Activated CD8-positive, alpha-beta T cell treated with anti-CD3 and anti-CD28 coated beads for 36 hours (primary cell): ENCODE measurements at regions of chr20 and their contacts with region 1.

Region 1: GRCh38 chr20:37192137-37192854 is 12.9 kb upstream of the MROH8 start:
- DNase-seq: peak; percentile 83
- ATAC-seq: peak; percentile 85
- H3K4me3 Mint-ChIP-seq: no peak overlapping the region
- H3K27ac Mint-ChIP-seq: no peak overlapping the region
- H3K4me1 Mint-ChIP-seq: peaks cover 74% of the 10 kb centered on the region
- H3K27me3 Mint-ChIP-seq: no peaks in the 10 kb centered on the region
- CTCF ChIP-seq: peak; percentile 90

Region 2: GRCh38 chr20:37178839-37179670 is 13.2 kb before region 1 on chr20 and contains the starts of genes MROH8 and RPN2:
- CTCF ChIA-PET with region 1: interaction called, 123 read pairs
- POLR2A ChIA-PET with region 1: interaction called, 30 read pairs
- intact Hi-C with region 1: no loop called
- DNase-seq: peak; percentile 98
- ATAC-seq: peak; percentile 94
- H3K4me3 Mint-ChIP-seq: peak within 1 kb of the TSS; percentile 91
- H3K27ac Mint-ChIP-seq: peak within 1 kb of the TSS; percentile 98
- H3K4me1 Mint-ChIP-seq: peaks cover 36% of the 10 kb centered on the region
- H3K27me3 Mint-ChIP-seq: no peaks in the 10 kb centered on the region
- CTCF ChIP-seq: no peak
- total RNA-seq, gene MROH8: 2.1 to 3.1 TPM
- total RNA-seq, gene RPN2: 103 to 107 TPM

Region 3: GRCh38 chr20:37202267-37202943 is 10.1 kb after region 1 on chr20:
- CTCF ChIA-PET with region 1: interaction called, 45 read pairs
- POLR2A ChIA-PET with region 1: no interaction called
- intact Hi-C with region 1: no loop called
- DNase-seq: peak; percentile 35
- ATAC-seq: no peak
- H3K4me3 Mint-ChIP-seq: no peak overlapping the region
- H3K27ac Mint-ChIP-seq: no peak overlapping the region
- H3K4me1 Mint-ChIP-seq: peaks cover 3% of the 10 kb centered on the region
- H3K27me3 Mint-ChIP-seq: no peaks in the 10 kb centered on the region
- CTCF ChIP-seq: peak; percentile 70

Region 4: DNA sequence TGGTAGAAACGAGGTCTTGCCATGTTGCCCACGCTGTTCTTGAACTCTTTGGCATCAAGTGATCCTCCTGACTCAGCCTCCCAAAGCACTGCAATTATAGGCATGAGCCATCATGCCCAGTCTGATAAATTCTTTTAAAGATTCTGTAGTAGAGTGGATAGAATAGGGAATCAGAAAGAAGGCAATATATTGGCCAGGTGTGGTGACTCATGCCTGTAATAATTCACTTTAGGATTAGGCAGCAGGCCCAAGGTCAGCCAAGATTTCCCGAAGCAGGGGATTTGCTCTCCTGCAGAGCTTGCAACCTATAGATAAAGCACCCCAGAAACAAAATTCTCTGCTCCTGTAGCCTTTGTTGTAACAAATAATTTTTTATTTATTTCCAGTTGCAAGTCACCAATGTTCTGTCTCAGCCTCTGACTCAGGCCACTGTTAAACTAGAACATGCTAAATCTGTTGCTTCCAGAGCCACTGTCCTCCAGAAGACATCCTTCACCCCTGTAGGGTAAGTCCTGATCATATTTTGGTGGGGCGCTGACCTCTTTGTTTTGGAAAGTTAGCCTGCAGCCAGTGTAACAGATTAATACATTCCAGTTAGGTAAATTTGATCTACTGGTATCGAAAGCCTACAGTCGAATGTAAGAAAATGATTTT is 17.5 kb after region 1 on chr20:
- CTCF ChIA-PET with region 1: interaction called, 21 read pairs
- POLR2A ChIA-PET with region 1: no interaction called
- intact Hi-C with region 1: no loop called
- DNase-seq: no peak
- ATAC-seq: no peak
- H3K4me3 Mint-ChIP-seq: no peak overlapping the region
- H3K27ac Mint-ChIP-seq: no peak overlapping the region
- H3K4me1 Mint-ChIP-seq: peaks cover 3% of the 10 kb centered on the region
- H3K27me3 Mint-ChIP-seq: no peaks in the 10 kb centered on the region
- CTCF ChIP-seq: no peak

Region 5: DNA sequence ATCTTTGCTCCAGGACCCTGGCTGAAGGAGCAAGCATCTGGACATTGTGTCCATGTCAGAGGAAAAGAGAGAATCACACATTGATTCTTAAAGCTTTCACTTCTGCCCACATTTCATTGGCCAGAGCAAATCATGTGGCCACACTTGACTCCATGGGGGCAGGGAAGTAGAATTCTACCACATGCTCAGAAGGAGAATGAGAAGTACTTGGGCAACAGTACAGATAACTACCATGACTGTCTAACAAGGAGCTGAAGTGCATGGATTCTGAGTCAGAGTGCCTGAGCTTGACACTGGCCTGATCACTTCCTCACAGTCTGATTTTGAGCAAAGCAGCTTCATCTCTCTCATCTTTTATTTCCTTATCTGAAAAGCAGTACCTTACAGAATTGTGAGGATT is 30.8 kb after region 1 on chr20:
- CTCF ChIA-PET with region 1: interaction called, 26 read pairs
- POLR2A ChIA-PET with region 1: no interaction called
- intact Hi-C with region 1: no loop called
- DNase-seq: no peak
- ATAC-seq: peak; percentile 66
- H3K4me3 Mint-ChIP-seq: no peak overlapping the region
- H3K27ac Mint-ChIP-seq: no peak overlapping the region
- H3K4me1 Mint-ChIP-seq: peaks cover 3% of the 10 kb centered on the region
- H3K27me3 Mint-ChIP-seq: no peaks in the 10 kb centered on the region
- CTCF ChIP-seq: no peak

Region 6: GRCh38 chr20:37384683-37385174 is 192.4 kb after region 1 on chr20:
- CTCF ChIA-PET with region 1: interaction called, 7 read pairs
- POLR2A ChIA-PET with region 1: no interaction called
- intact Hi-C with region 1: loop called (anchors 5 kb)
- DNase-seq: peak; percentile 81
- ATAC-seq: peak; percentile 96
- H3K4me3 Mint-ChIP-seq: peak overlapping the region; percentile 49
- H3K27ac Mint-ChIP-seq: peak overlapping the region; percentile 63
- H3K4me1 Mint-ChIP-seq: peaks cover 12% of the 10 kb centered on the region
- H3K27me3 Mint-ChIP-seq: peaks cover 5% of the 10 kb centered on the region
- CTCF ChIP-seq: peak; percentile 93

Region 7: DNA sequence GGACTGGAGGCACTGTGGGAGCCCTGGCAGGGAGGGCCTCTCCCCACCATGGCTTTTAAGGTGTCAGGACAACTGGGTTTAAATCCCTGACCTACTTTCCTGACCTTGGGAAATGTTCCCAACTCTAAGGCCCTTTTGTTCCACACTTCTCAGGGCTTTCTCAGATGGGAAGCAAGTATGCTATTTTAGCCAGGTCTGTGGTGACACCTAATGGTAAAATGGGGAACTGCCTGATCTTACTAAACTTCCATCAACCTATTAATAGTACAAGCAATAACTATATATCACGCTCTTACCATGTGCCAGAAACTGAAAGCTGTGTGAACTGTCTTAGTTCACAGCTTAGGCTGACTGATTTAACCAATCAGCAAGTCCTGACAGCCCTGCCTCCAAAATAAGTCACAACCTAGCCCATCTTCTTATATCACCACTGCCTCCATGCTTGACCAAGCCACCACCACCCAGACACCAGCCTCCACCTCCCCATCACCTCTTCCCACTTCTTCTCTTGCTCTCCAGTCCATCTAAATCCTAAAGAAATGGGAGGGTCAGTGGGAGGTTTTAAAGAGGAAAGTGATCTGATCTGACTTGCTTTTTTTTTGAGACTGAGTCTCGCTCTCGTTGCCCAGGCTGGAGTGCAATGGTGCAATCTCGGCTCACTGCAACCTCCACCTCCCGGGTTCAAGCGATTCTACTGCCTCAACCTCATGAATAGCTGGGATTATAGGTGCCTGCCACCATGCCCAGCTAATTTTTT is 342.3 kb after region 1 on chr20:
- CTCF ChIA-PET with region 1: interaction called, 26 read pairs
- POLR2A ChIA-PET with region 1: no interaction called
- intact Hi-C with region 1: loop called (anchors 5 kb)
- DNase-seq: peak; percentile 63
- ATAC-seq: peak; percentile 95
- H3K4me3 Mint-ChIP-seq: no peak overlapping the region
- H3K27ac Mint-ChIP-seq: no peak overlapping the region
- H3K4me1 Mint-ChIP-seq: peaks cover 3% of the 10 kb centered on the region
- H3K27me3 Mint-ChIP-seq: no peaks in the 10 kb centered on the region
- CTCF ChIP-seq: peak; percentile 87